Aorta (tissue), 5 donors: ENCODE measurements at regions of chr7 and their contacts with region 1.

Region 1: GRCh38 chr7:132580717-132581285 is 4.5 kb upstream of the PLXNA4 start:
- DNase-seq: peak; percentile 75 to 85
- ATAC-seq: peak; percentile 69
- H3K4me3 ChIP-seq: no peak overlapping the region
- H3K27ac ChIP-seq: no peak overlapping the region
- H3K4me1 ChIP-seq: no peaks in the 10 kb centered on the region
- H3K27me3 ChIP-seq: no peaks in the 10 kb centered on the region

Region 2: DNA sequence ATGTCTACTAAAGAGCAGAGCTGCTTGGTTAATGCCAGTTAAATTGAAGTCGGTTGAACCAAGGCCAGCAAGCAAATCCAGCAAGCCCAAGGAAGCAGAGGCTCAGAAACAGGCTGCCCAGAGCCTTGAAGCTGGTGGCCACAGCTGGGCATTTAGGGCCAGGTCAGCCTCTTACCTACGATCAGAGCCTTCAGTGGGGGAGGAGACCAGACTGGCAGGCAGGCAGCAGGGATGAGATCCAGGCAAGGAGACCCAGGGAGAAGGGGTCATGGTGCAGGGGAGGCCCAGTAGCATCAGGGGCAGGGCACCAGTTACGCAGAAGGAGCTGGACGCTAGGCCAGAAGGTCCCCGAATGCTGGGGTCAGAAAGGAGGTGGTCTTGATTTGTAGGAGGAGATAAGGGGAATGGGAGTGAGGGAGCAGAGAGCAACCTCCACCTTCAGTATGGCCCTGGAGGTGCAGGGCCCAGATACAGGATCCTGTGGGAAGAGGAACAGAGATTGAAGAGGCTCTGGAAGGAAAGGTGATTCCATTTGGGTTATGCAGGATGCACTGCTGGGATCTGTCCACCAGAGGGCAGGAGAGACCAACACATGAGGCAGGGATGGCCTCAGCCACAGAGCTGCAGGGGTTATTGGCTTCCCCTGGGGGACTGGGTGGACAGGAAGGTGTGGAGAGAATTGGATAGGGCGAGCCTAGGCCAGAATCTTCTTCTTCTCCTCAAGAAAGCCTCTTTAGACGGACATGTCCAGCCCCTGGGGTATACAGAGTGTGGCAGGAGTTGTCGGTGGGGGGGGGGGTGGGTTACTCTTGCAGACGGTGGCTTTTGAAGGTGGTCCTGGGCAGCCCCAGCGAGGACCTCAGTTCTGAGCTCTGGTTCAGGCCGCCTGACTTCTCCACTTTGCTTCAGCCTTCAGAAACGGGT is 891.8 kb before region 1 on chr7:
- intact Hi-C with region 1: loop called in 1 of 2 experiments (anchors 5 kb)
- DNase-seq: peak; percentile 62 to 82
- ATAC-seq: peak; percentile 73
- H3K4me3 ChIP-seq: no peak overlapping the region
- H3K27ac ChIP-seq: no peak overlapping the region
- H3K4me1 ChIP-seq: no peaks in the 10 kb centered on the region
- H3K27me3 ChIP-seq: peaks cover 0 to 2% of the 10 kb centered on the region in 2 donors

Region 3: GRCh38 chr7:131859147-131859821 is 721.5 kb before region 1 on chr7:
- intact Hi-C with region 1: loop called in 1 of 2 experiments (anchors 2 kb)
- DNase-seq: peak; percentile 71 to 83
- ATAC-seq: peak; percentile 76
- H3K4me3 ChIP-seq: no peak overlapping the region
- H3K27ac ChIP-seq: no peak overlapping the region
- H3K4me1 ChIP-seq: no peaks in the 10 kb centered on the region
- H3K27me3 ChIP-seq: peaks cover 0 to 2% of the 10 kb centered on the region in 2 donors

Region 4: DNA sequence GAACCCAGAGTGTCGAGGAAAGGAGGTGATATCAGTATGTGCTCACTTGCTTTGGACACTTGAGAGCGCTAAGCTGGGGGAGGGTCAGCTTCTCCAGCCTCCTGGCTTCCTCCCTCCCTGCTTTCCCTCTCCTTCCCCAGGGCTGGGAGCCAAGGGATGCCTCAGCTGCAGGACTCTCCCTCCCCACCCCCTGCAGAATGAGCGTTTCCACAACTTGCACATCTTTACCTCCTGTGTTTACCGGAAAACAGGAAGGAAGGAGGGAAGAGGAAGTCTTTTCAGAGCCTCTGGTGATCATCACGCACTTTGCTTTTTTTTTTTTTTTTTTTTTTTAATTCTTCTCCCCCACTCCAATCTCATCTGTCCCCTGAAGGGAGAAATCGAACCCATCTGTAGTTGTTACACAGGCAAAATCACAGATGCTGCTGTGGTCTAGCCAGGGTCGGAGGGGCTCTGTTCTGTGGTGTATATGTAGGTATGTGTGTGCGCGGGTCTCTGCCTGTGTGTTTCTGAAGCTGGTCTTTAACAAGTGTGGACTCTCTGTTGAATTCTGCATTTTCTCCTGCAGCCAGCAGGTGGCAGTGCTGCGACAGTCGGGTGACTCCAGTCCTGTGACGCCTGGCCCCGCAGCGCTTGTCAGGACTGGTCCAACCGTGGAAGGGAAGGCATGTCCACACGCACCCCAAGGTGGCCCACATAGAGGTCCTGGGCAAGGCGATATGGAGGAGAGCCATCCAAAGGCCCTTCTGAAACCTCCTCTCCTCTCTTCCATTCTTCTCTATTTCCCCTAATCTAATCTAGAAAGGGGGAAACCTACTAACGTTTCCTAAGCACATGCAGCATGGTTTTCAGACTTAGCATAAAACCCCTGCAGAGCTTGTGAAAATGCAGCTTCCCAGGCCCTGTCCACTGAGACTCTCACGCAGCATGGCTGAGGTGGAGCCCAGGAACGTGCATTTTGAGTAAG is 262.2 kb before region 1 on chr7:
- intact Hi-C with region 1: loop called (anchors 2 kb)
- DNase-seq: peak; percentile 87 to 96
- ATAC-seq: peak; percentile 92
- H3K4me3 ChIP-seq: no peak overlapping the region
- H3K27ac ChIP-seq: no peak overlapping the region
- H3K4me1 ChIP-seq: no peaks in the 10 kb centered on the region
- H3K27me3 ChIP-seq: no peaks in the 10 kb centered on the region

Region 5: GRCh38 chr7:132500727-132501440 is 79.9 kb before region 1 on chr7:
- intact Hi-C with region 1: loop called in 1 of 2 experiments (anchors 5 kb)
- DNase-seq: peak; percentile 86
- ATAC-seq: peak; percentile 81
- H3K4me3 ChIP-seq: no peak overlapping the region
- H3K27ac ChIP-seq: no peak overlapping the region
- H3K4me1 ChIP-seq: no peaks in the 10 kb centered on the region
- H3K27me3 ChIP-seq: no peaks in the 10 kb centered on the region